Caco-2 (cell line): ENCODE measurements at regions of chr20 and their contacts with region 1.

Region 1: GRCh38 chr20:25623736-25624499 is at the start of gene NANP:
- DNase-seq: peak; percentile 99
- H3K4me3 ChIP-seq: peak within 1 kb of the TSS; percentile 100
- H3K4me3 Mint-ChIP-seq: peak within 1 kb of the TSS; percentile 83
- H3K27ac Mint-ChIP-seq: peak within 1 kb of the TSS; percentile 96
- H3K4me1 ChIP-seq: peaks cover 8% of the 10 kb centered on the region; the same call in 1 of the 2 replicates
- H3K4me1 Mint-ChIP-seq: peaks cover 17% of the 10 kb centered on the region
- H3K27me3 ChIP-seq: no peaks in the 10 kb centered on the region
- H3K27me3 Mint-ChIP-seq: no peaks in the 10 kb centered on the region
- CTCF ChIP-seq: no peak
- total RNA-seq, gene NANP: 9.3 and 10.1 TPM in 2 replicates

Region 2: DNA sequence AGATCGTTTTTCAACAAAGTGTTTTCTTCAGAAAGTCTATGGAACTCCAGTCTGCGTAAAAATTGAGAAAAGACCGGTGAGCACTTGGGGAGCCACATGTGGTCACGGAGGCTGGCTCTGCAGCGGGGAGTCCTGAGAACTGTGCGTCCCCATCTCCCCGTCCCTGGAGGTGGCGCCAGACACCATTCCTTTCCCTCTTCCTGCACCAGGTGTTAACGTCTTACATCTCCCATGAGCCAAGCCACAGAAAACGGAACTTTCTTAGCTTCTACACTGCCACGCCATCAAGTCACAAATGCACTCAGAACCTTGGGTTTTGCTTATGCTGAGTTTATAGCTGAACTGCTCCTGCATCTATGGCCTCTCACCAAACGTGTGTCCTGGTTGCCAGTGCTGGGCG is 153.9 kb before region 1 on chr20:
- CTCF ChIA-PET with region 1: no interaction called
- POLR2A ChIA-PET with region 1: no interaction called
- intact Hi-C with region 1: loop called (anchors 2 kb)
- DNase-seq: peak; percentile 77 to 78
- H3K4me3 ChIP-seq: no peak overlapping the region
- H3K4me3 Mint-ChIP-seq: no peak overlapping the region
- H3K27ac Mint-ChIP-seq: no peak overlapping the region
- H3K4me1 ChIP-seq: peaks cover 4% of the 10 kb centered on the region; the same call in 1 of the 2 replicates
- H3K4me1 Mint-ChIP-seq: no peaks in the 10 kb centered on the region
- H3K27me3 ChIP-seq: no peaks in the 10 kb centered on the region
- H3K27me3 Mint-ChIP-seq: no peaks in the 10 kb centered on the region
- CTCF ChIP-seq: peak; percentile 65 to 75

Region 3: GRCh38 chr20:25549843-25550477 is 74.0 kb before region 1 on chr20:
- CTCF ChIA-PET with region 1: no interaction called
- POLR2A ChIA-PET with region 1: no interaction called
- intact Hi-C with region 1: loop called (anchors 2 kb)
- DNase-seq: no peak
- H3K4me3 ChIP-seq: no peak overlapping the region; the same call in 1 of the 2 replicates
- H3K4me3 Mint-ChIP-seq: peak overlapping the region; percentile 41
- H3K27ac Mint-ChIP-seq: peak overlapping the region; percentile 90
- H3K4me1 ChIP-seq: peaks cover 56% of the 10 kb centered on the region
- H3K4me1 Mint-ChIP-seq: peaks cover 46% of the 10 kb centered on the region
- H3K27me3 ChIP-seq: no peaks in the 10 kb centered on the region
- H3K27me3 Mint-ChIP-seq: no peaks in the 10 kb centered on the region
- CTCF ChIP-seq: no peak